ENCODE measurements at regions of chr17 and their contacts with region 1.

Region 1: GRCh38 chr17:8222630-8223356 is 12.4 kb upstream of the AURKB start:
- H3K4me3 ChIP-seq: peak overlapping the region; percentile 78
- H3K27ac ChIP-seq: peak overlapping the region; percentile 70
- H3K4me1 ChIP-seq: peaks cover 12% of the 10 kb centered on the region
- CTCF ChIP-seq: no peak

Region 2: GRCh38 chr17:8156246-8156992 is 66.4 kb before region 1 on chr17:
- CTCF ChIA-PET with region 1: interaction called, 4 read pairs
- POLR2A ChIA-PET with region 1: interaction called, 13 read pairs
- H3K4me3 ChIP-seq: peak overlapping the region; percentile 45
- H3K27ac ChIP-seq: peak overlapping the region; percentile 69
- H3K4me1 ChIP-seq: peaks cover 31% of the 10 kb centered on the region
- CTCF ChIP-seq: peak; percentile 34

Region 3: DNA sequence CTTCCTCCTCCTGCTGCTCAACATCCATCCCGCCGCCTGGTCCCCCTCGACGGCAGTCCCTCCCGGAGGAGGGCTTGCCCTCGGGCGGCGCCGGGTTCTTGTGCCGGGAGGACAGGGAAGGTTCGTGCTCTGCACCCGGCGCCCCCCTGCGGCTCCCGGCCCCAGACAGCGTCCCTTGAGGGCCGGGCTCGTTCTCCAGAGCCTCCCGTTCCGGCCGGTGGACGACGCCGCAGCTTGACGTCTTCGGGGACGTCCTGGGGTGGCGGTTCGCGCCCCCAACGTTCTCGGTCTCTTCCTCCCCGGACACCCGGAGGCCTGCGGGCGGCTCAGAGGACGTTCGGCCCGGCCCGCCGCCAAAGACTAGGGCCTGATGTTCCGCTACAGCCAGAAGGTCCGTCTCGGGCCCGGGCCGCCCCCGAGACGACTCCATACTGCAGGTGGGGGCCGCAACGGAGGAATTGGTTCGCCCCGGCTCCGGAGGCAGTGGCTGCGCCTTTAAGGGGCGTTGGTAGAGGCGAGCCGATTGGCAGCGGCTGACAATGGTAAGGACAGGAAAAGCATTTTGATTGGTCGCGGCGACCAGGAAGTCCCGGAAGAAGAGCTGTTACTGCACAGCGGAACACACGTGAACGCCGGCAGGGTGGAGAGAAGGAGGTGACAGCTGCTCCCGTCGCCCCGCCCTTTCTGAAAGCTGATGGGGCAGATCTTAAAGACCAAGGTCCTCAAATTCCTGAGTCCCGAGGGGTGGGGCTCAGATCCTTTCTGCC is 32.9 kb before region 1 on chr17 and contains the start of gene BORCS6:
- CTCF ChIA-PET with region 1: interaction called, 6 read pairs
- POLR2A ChIA-PET with region 1: interaction called, 96 read pairs
- H3K4me3 ChIP-seq: peak within 1 kb of the TSS; percentile 75
- H3K27ac ChIP-seq: peak within 1 kb of the TSS; percentile 75; the same call in 1 of the 2 replicates
- H3K4me1 ChIP-seq: peaks cover 13% of the 10 kb centered on the region
- CTCF ChIP-seq: peak; percentile 88

Region 4: DNA sequence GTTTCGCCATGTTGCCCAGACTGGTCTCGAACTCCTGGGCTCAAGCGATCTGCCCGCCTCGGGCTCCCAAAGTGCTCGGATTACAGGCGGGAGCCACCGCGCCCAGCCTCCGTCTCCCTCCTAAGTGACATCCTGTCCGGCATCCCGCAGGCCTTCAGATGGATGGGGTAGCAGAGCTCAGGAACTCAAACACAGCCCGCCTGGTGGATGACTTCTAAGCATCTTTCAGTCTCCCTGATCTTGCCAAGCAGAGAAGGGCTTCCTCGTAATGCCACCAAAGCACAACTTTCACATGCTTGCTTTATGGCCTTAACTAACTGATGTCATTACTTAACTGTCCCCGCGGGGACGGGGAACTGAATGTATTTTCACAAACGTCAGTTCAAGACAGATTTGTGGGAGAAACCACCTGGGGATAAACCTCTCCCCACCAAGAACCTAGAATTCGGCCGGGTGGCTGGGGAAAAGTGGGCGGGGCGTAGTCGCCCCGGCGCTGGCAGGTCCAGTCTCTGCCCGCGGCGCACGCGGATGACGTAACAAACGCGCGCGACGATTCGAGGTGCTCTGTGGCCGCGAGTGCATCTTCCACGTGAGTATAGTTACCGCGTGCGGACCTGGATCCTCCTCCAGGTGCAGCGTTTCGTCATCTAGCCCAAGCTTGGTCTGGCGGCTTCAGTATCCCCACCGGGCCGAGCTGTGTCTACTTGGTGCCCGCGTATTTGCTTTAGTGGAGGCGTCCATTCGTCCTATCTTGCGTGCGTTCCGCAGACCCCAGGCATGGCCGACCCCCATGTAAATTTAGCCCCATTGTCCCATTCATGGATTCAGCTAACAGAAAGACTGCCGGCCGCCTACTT is 26.2 kb after region 1 on chr17 and contains the start of gene PFAS:
- CTCF ChIA-PET with region 1: interaction called, 5 read pairs
- POLR2A ChIA-PET with region 1: interaction called, 81 read pairs
- H3K4me3 ChIP-seq: peak within 1 kb of the TSS; percentile 77
- H3K27ac ChIP-seq: peak within 1 kb of the TSS; percentile 91
- H3K4me1 ChIP-seq: peaks cover 6% of the 10 kb centered on the region
- CTCF ChIP-seq: no peak

Region 5: GRCh38 chr17:8294814-8295316 is 72.1 kb after region 1 on chr17:
- CTCF ChIA-PET with region 1: interaction called, 19 read pairs
- POLR2A ChIA-PET with region 1: interaction called, 27 read pairs
- H3K4me3 ChIP-seq: peak overlapping the region; percentile 30
- H3K27ac ChIP-seq: peak overlapping the region; percentile 84
- H3K4me1 ChIP-seq: no peaks in the 10 kb centered on the region
- CTCF ChIP-seq: no peak

Measured in HEK293 (cell line).